Heart right ventricle (tissue), 16 donors: ENCODE measurements at regions of chr18 and their contacts with region 1.

Region 1: GRCh38 chr18:11908182-11909060 is at the start of gene MPPE1:
- DNase-seq: peak; percentile 89 to 92
- ATAC-seq: peak; percentile 93 to 98 (median 97)
- H3K4me3 ChIP-seq: peak within 1 kb of the TSS; percentile 49 to 97 (median 86)
- H3K27ac ChIP-seq: peak within 1 kb of the TSS; percentile 92 to 100 (median 100)
- H3K4me1 ChIP-seq: peaks cover 0 to 37% (median 26%) of the 10 kb centered on the region in 9 donors
- H3K27me3 ChIP-seq: no peaks in the 10 kb centered on the region
- CTCF ChIP-seq: no peak
- total RNA-seq, gene MPPE1: 21.2 to 44.5 (median 34.1) TPM

Region 2: GRCh38 chr18:11857177-11857887 is 51.1 kb before region 1 on chr18:
- intact Hi-C with region 1: loop called in 4 of 10 experiments (anchors 5 to 10 kb)
- DNase-seq: peak; percentile 34 to 51
- ATAC-seq: peak; percentile 44 to 96 (median 80)
- H3K4me3 ChIP-seq: peak overlapping the region in 3 of 10 donors; percentile 13 to 16 (median 14)
- H3K27ac ChIP-seq: peak overlapping the region in 9 of 10 donors; percentile 9 to 83 (median 72)
- H3K4me1 ChIP-seq: peaks cover 0 to 73% (median 24%) of the 10 kb centered on the region in 9 donors
- H3K27me3 ChIP-seq: no peaks in the 10 kb centered on the region
- CTCF ChIP-seq: no peak

Region 3: GRCh38 chr18:11947214-11948191 is 39.1 kb after region 1 on chr18:
- intact Hi-C with region 1: loop called in 2 of 10 experiments (anchors 2 to 5 kb)
- DNase-seq: peak; percentile 92 to 94
- ATAC-seq: peak; percentile 96 to 99 (median 98)
- H3K4me3 ChIP-seq: peak overlapping the region; percentile 23 to 75 (median 59)
- H3K27ac ChIP-seq: peak overlapping the region; percentile 76 to 99 (median 97)
- H3K4me1 ChIP-seq: peaks cover 0 to 24% (median 15%) of the 10 kb centered on the region in 9 donors
- H3K27me3 ChIP-seq: no peaks in the 10 kb centered on the region
- CTCF ChIP-seq: peak in 3 of 9 donors; percentile 6 to 15 (median 8)

Region 4: GRCh38 chr18:11980555-11981382 is 72.3 kb after region 1 on chr18:
- intact Hi-C with region 1: loop called in 1 of 10 experiments (anchors 2 kb)
- DNase-seq: peak; percentile 96 to 99
- ATAC-seq: peak; percentile 89 to 97 (median 94)
- H3K4me3 ChIP-seq: peak overlapping the region; percentile 77 to 95 (median 88)
- H3K27ac ChIP-seq: peak overlapping the region; percentile 93 to 98 (median 96)
- H3K4me1 ChIP-seq: peaks cover 0 to 51% (median 31%) of the 10 kb centered on the region in 9 donors
- H3K27me3 ChIP-seq: no peaks in the 10 kb centered on the region
- CTCF ChIP-seq: peak in 4 of 9 donors; percentile 11 to 46 (median 44)